Naive thymus-derived CD4-positive, alpha-beta T cell (primary cell): ENCODE measurements at regions of chr19 and their contacts with region 1.

Region 1: GRCh38 chr19:2151339-2152229 is at the start of gene AP3D1:
- DNase-seq: peak; percentile 98 to 100 (median 100)
- ATAC-seq: peak; percentile 95
- H3K4me3 ChIP-seq: peak within 1 kb of the TSS; percentile 76
- H3K4me3 Mint-ChIP-seq: peak within 1 kb of the TSS; percentile 76 to 93 (median 84)
- H3K27ac ChIP-seq: peak within 1 kb of the TSS; percentile 95
- H3K27ac Mint-ChIP-seq: peak within 1 kb of the TSS; percentile 74 to 95 (median 89)
- H3K4me1 ChIP-seq: peaks cover 19 to 29% of the 10 kb centered on the region in 2 donors
- H3K4me1 Mint-ChIP-seq: peaks cover 16 to 48% (median 41%) of the 10 kb centered on the region in 7 donors
- H3K27me3 ChIP-seq: no peaks in the 10 kb centered on the region
- H3K27me3 Mint-ChIP-seq: peaks cover 0 to 2% (median 0%) of the 10 kb centered on the region in 5 donors
- total RNA-seq, gene AP3D1: 63.7 to 106 (median 80.3) TPM

Region 2: GRCh38 chr19:1863726-1864480 is 287.7 kb before region 1 on chr19:
- CTCF ChIA-PET with region 1: no interaction called
- POLR2A ChIA-PET with region 1: no interaction called
- intact Hi-C with region 1: loop called (anchors 1 to 5 kb)
- DNase-seq: peak; percentile 89 to 96 (median 94)
- ATAC-seq: peak; percentile 84
- H3K4me3 ChIP-seq: peak overlapping the region; percentile 79
- H3K4me3 Mint-ChIP-seq: peak overlapping the region; percentile 38 to 82 (median 73)
- H3K27ac ChIP-seq: peak overlapping the region; percentile 78
- H3K27ac Mint-ChIP-seq: peak overlapping the region; percentile 15 to 86 (median 76)
- H3K4me1 ChIP-seq: peaks cover 13 to 32% of the 10 kb centered on the region in 2 donors
- H3K4me1 Mint-ChIP-seq: peaks cover 6 to 46% (median 32%) of the 10 kb centered on the region in 7 donors
- H3K27me3 ChIP-seq: no peaks in the 10 kb centered on the region
- H3K27me3 Mint-ChIP-seq: no peaks in the 10 kb centered on the region

Region 3: GRCh38 chr19:2050991-2051772 is 100.4 kb before region 1 on chr19 and contains the start of gene MKNK2:
- CTCF ChIA-PET with region 1: no interaction called
- POLR2A ChIA-PET with region 1: no interaction called
- intact Hi-C with region 1: loop called in 1 of 2 experiments (anchors 2 kb)
- DNase-seq: peak; percentile 89 to 100 (median 94)
- ATAC-seq: peak; percentile 91
- H3K4me3 ChIP-seq: peak within 1 kb of the TSS; percentile 98
- H3K4me3 Mint-ChIP-seq: peak within 1 kb of the TSS; percentile 83 to 90 (median 86)
- H3K27ac ChIP-seq: peak within 1 kb of the TSS; percentile 90
- H3K27ac Mint-ChIP-seq: peak within 1 kb of the TSS; percentile 87 to 96 (median 94)
- H3K4me1 ChIP-seq: peaks cover 45 to 58% of the 10 kb centered on the region in 2 donors
- H3K4me1 Mint-ChIP-seq: peaks cover 9 to 57% (median 30%) of the 10 kb centered on the region in 7 donors
- H3K27me3 ChIP-seq: no peaks in the 10 kb centered on the region
- H3K27me3 Mint-ChIP-seq: no peaks in the 10 kb centered on the region
- total RNA-seq, gene MKNK2: 190 to 347 (median 238) TPM

Region 4: DNA sequence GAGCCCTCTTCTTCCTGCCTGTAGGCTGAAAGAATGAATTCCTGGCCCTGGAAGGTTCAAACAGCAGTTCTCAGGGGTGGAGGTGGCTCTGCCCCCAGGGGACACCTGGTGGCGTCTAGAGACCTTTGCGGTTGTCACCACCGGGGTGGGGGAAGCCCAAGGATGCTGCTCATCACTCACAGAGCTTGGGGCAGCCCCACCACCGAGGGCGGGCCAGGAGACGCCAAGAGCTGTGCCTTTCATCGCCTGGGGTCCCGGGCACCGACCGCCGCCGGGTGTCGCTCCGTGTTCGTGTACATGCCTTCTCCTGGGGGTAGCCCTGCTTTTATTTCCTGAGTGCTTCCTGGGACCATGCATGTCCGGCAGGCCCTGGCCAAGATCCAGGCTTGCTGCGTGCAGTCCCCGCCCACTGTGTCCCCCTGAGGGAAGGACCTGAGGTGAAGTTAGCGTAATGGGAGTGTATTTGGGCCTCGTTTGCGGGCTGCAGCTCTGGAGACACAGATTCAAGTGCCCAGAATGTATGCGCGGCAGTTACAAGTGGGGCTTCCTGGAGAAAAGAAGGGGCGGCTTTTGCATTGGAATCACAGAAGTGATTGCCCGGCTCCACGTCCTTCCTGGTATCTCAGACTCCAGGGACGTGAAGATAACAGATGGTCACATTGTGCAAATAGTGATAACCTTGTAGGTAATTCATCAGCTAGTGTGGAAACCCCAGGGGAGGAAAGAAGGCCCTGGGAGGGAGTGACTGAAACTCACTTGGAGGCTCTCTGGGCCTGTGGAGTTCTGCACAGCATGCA is 20.0 kb after region 1 on chr19:
- CTCF ChIA-PET with region 1: interaction called, 4 read pairs
- POLR2A ChIA-PET with region 1: no interaction called
- intact Hi-C with region 1: loop called in 1 of 2 experiments (anchors 1 kb)
- DNase-seq: peak in 5 of 9 donors; percentile 27 to 81 (median 38)
- ATAC-seq: peak; percentile 58
- H3K4me3 ChIP-seq: no peak overlapping the region
- H3K4me3 Mint-ChIP-seq: no peak overlapping the region
- H3K27ac ChIP-seq: peak overlapping the region; percentile 60
- H3K27ac Mint-ChIP-seq: peak overlapping the region in 2 of 9 donors; percentile 14 to 18
- H3K4me1 ChIP-seq: peaks cover 14 to 25% of the 10 kb centered on the region in 2 donors
- H3K4me1 Mint-ChIP-seq: peaks cover 19 to 70% (median 35%) of the 10 kb centered on the region in 7 donors
- H3K27me3 ChIP-seq: no peaks in the 10 kb centered on the region
- H3K27me3 Mint-ChIP-seq: no peaks in the 10 kb centered on the region

Region 5: DNA sequence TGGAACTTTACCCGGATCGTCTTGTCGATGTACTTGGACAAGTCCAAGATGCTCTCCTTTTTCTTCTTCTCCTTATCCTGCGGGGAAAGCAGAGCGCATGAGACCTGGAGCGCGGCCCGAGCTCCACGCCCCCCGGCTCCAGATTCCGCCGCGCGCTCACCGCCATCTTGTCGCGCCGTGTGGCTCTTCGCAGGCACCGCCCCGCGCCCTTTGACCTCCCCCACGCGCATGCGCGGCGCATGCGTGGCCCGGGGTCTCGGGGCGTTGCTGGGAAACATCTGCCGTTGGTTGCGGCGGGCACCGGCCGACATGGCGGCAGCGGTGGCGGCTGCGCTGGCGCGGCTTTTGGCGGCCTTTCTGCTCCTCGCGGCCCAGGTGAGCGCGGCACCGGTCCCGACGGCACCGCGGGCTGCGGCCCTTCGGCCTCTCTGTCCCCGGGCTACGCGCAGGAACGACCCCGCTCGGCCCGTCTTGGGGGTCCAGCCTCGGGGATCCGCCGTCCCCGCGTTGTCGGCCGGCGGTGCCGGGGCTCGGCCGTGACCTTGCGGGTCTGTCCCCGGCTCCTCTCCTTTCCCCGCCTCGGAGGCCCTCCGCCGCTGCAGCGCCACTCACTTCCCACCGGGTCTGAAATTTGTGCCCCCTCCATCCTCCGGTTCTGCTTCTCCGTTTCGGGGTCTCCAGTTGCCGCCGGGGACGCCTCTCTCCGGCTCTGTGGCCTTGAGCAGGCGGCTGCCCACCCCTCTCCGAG is 177.0 kb after region 1 on chr19 and contains the starts of genes LSM7 and SPPL2B:
- CTCF ChIA-PET with region 1: no interaction called
- POLR2A ChIA-PET with region 1: interaction called, 4 read pairs
- intact Hi-C with region 1: loop called (anchors 1 kb)
- DNase-seq: peak; percentile 87 to 95 (median 91)
- ATAC-seq: peak; percentile 85
- H3K4me3 ChIP-seq: peak within 1 kb of the TSS; percentile 95
- H3K4me3 Mint-ChIP-seq: peak within 1 kb of the TSS; percentile 94 to 100 (median 98)
- H3K27ac ChIP-seq: peak within 1 kb of the TSS; percentile 93
- H3K27ac Mint-ChIP-seq: peak within 1 kb of the TSS; percentile 91 to 100 (median 99)
- H3K4me1 ChIP-seq: peaks cover 10 to 48% of the 10 kb centered on the region in 2 donors
- H3K4me1 Mint-ChIP-seq: peaks cover 35 to 80% (median 62%) of the 10 kb centered on the region in 7 donors
- H3K27me3 ChIP-seq: no peaks in the 10 kb centered on the region
- H3K27me3 Mint-ChIP-seq: peaks cover 0 to 2% (median 0%) of the 10 kb centered on the region in 5 donors
- total RNA-seq, gene LSM7: 79.4 to 131 (median 102) TPM
- total RNA-seq, gene SPPL2B: 92.2 to 150 (median 140) TPM

Region 6: GRCh38 chr19:2610637-2611482 is 459.3 kb after region 1 on chr19:
- CTCF ChIA-PET with region 1: no interaction called
- POLR2A ChIA-PET with region 1: no interaction called
- intact Hi-C with region 1: loop called in 1 of 2 experiments (anchors 1 kb)
- DNase-seq: peak; percentile 69 to 93 (median 81)
- ATAC-seq: peak; percentile 86
- H3K4me3 ChIP-seq: peak overlapping the region; percentile 61
- H3K4me3 Mint-ChIP-seq: peak overlapping the region; percentile 70 to 91 (median 85)
- H3K27ac ChIP-seq: peak overlapping the region; percentile 55
- H3K27ac Mint-ChIP-seq: peak overlapping the region in 6 of 9 donors; percentile 41 to 86 (median 60)
- H3K4me1 ChIP-seq: peaks cover 17 to 23% of the 10 kb centered on the region in 2 donors
- H3K4me1 Mint-ChIP-seq: peaks cover 16 to 44% (median 34%) of the 10 kb centered on the region in 7 donors
- H3K27me3 ChIP-seq: no peaks in the 10 kb centered on the region
- H3K27me3 Mint-ChIP-seq: peaks cover 0 to 26% (median 0%) of the 10 kb centered on the region in 5 donors

Region 7: DNA sequence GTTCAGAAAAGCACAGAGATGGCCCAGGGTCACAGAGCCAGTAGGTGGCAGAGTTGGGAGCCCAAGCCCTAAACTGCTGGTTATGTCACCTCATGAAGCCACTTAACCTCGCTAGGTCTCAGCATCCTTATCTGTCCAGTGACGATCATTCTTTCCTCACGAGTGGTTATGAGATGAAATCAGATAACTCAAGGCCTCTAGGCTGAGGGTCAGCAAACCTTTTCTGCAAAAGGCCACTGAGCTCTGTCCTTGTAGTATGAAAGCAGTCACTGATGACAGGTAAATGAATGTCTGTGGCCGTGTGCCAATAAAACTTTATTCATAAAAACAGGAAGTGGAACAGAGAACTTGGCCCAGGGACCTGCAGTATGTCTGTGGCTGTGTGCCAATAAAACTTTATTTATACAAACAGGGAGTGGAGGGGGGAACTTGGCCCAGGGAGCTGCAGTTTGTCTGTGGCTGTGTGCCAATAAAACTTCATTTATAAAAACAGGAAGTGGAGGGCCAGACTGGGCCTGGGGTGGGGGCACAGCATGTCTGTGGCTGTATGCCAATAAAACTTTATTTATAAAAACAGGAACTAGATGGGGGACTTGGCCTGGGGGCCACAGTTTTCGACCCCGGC is 479.7 kb after region 1 on chr19:
- CTCF ChIA-PET with region 1: no interaction called
- POLR2A ChIA-PET with region 1: no interaction called
- intact Hi-C with region 1: no loop called
- DNase-seq: peak in 2 of 9 donors; percentile 27 to 30
- ATAC-seq: peak; percentile 24
- H3K4me3 ChIP-seq: no peak overlapping the region
- H3K4me3 Mint-ChIP-seq: peak overlapping the region in 2 of 10 donors; percentile 12 to 37
- H3K27ac ChIP-seq: no peak overlapping the region
- H3K27ac Mint-ChIP-seq: peak overlapping the region in 8 of 9 donors; percentile 45 to 82 (median 64)
- H3K4me1 ChIP-seq: peaks cover 15 to 25% of the 10 kb centered on the region in 2 donors
- H3K4me1 Mint-ChIP-seq: peaks cover 13 to 56% (median 44%) of the 10 kb centered on the region in 7 donors
- H3K27me3 ChIP-seq: no peaks in the 10 kb centered on the region
- H3K27me3 Mint-ChIP-seq: no peaks in the 10 kb centered on the region